B cell (primary cell): ENCODE measurements at regions of chr3 and their contacts with region 1.

Region 1: GRCh38 chr3:186783073-186783730 is at the start of gene EIF4A2:
- DNase-seq: peak; percentile 97
- ATAC-seq: peak; percentile 77
- H3K4me3 ChIP-seq: peak within 1 kb of the TSS; percentile 80 to 100 (median 90)
- H3K4me3 Mint-ChIP-seq: peak within 1 kb of the TSS; percentile 97
- H3K27ac ChIP-seq: peak within 1 kb of the TSS; percentile 97 to 98
- H3K27ac Mint-ChIP-seq: peak within 1 kb of the TSS; percentile 99
- H3K4me1 ChIP-seq: peaks cover 37 to 40% of the 10 kb centered on the region in 2 donors
- H3K4me1 Mint-ChIP-seq: peaks cover 52% of the 10 kb centered on the region
- H3K27me3 ChIP-seq: no peaks in the 10 kb centered on the region
- H3K27me3 Mint-ChIP-seq: no peaks in the 10 kb centered on the region
- CTCF ChIP-seq: no peak
- total RNA-seq, gene EIF4A2: 490 and 506 TPM in 2 replicates

Region 2: DNA sequence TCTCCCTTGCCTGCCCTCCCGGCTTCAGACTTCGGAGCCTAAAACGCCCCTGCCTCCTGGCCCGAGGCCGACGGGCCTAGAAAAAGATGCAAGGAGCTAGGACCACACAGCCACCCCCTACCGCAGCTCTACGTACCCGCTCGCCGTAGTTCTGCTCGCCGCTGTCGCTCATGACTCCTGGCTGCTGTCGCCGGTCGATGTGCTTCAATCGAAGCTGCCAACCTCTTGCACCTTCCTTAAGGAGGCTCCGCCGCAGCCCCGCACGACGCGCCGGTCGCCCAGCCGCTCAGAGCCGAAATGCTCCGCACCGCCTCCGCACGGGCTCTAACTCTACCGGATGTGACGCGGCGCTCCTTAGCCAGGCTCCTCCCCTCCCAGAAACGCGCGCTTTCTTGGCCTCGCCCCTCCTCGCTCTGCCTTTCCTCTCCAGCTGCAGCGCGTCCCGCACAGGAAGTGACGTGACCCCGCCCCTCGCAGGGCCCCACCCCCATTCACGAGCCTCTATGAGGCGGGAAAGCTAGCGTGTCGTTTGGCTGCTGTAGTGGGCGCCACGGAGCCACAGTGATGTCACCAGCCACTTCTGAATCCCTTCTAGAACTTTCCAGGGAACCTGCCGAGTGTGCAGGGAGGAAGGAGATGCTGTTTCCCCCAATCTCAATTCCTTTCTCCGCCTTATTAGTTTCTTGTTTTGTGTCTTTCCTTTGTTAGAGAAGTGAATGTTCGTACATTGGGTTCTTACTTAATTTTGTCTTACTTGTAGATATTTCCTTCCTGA is 845.3 kb before region 1 on chr3 and contains the start of gene TRA2B:
- CTCF ChIA-PET with region 1: interaction called, 8 read pairs
- POLR2A ChIA-PET with region 1: interaction called, 16 read pairs
- intact Hi-C with region 1: loop called (anchors 1 kb)
- DNase-seq: peak; percentile 99
- ATAC-seq: peak; percentile 89
- H3K4me3 ChIP-seq: peak within 1 kb of the TSS; percentile 99 to 100 (median 100)
- H3K4me3 Mint-ChIP-seq: peak within 1 kb of the TSS; percentile 99
- H3K27ac ChIP-seq: peak within 1 kb of the TSS; percentile 99 to 100
- H3K27ac Mint-ChIP-seq: peak within 1 kb of the TSS; percentile 100
- H3K4me1 ChIP-seq: peaks cover 26 to 28% of the 10 kb centered on the region in 2 donors
- H3K4me1 Mint-ChIP-seq: peaks cover 39% of the 10 kb centered on the region
- H3K27me3 ChIP-seq: no peaks in the 10 kb centered on the region
- H3K27me3 Mint-ChIP-seq: no peaks in the 10 kb centered on the region
- CTCF ChIP-seq: peak; percentile 51
- total RNA-seq, gene TRA2B: 218 and 220 TPM in 2 replicates

Region 3: DNA sequence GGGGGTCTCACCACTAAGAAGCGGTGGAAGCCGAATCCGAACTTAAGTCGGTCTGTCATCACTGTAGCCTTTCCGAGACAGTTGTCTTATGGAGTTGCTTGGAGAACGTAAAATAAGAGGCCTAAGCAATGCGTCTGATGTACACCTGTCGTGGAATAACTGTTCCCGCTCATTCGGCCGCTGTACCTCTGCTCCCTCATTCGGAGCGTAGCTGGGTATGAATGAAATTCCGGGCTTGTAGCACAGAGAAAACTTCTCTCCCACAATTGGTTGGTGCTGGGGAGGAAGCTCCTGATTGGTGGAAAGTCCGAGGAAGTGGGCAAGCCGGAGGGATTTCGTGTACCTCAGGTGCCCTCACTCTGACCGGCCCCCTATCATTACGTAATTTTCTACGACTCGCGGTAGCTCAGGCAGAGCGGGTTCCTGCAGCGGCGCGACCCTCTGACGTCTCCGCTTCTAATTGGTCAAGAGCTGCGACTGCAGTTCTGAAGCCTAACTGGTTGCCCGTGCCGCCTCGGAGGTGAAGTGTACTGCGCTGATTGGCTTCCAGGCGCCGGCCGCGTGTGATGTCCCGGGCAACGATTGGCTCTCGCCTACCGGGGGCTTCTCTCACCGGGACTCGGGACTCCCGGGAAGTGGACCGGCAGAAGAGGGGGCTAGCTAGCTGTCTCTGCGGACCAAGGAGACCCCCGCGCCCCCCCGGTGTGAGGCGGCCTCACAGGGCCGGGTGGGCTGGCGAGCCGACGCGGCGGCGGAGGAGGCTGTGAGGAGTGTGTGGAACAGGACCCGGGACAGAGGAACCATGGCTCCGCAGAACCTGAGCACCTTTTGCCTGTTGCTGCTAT is 212.9 kb before region 1 on chr3 and contains the start of gene DNAJB11:
- CTCF ChIA-PET with region 1: no interaction called
- POLR2A ChIA-PET with region 1: interaction called, 18 read pairs
- intact Hi-C with region 1: loop called (anchors 1 kb)
- DNase-seq: peak; percentile 99
- ATAC-seq: peak; percentile 85
- H3K4me3 ChIP-seq: peak within 1 kb of the TSS; percentile 86 to 98 (median 90)
- H3K4me3 Mint-ChIP-seq: peak within 1 kb of the TSS; percentile 98
- H3K27ac ChIP-seq: peak within 1 kb of the TSS; percentile 91 to 96
- H3K27ac Mint-ChIP-seq: peak within 1 kb of the TSS; percentile 98
- H3K4me1 ChIP-seq: peaks cover 28 to 40% of the 10 kb centered on the region in 2 donors
- H3K4me1 Mint-ChIP-seq: peaks cover 51% of the 10 kb centered on the region
- H3K27me3 ChIP-seq: no peaks in the 10 kb centered on the region
- H3K27me3 Mint-ChIP-seq: no peaks in the 10 kb centered on the region
- CTCF ChIP-seq: no peak
- total RNA-seq, gene DNAJB11: 27.7 and 28.5 TPM in 2 replicates

Region 4: DNA sequence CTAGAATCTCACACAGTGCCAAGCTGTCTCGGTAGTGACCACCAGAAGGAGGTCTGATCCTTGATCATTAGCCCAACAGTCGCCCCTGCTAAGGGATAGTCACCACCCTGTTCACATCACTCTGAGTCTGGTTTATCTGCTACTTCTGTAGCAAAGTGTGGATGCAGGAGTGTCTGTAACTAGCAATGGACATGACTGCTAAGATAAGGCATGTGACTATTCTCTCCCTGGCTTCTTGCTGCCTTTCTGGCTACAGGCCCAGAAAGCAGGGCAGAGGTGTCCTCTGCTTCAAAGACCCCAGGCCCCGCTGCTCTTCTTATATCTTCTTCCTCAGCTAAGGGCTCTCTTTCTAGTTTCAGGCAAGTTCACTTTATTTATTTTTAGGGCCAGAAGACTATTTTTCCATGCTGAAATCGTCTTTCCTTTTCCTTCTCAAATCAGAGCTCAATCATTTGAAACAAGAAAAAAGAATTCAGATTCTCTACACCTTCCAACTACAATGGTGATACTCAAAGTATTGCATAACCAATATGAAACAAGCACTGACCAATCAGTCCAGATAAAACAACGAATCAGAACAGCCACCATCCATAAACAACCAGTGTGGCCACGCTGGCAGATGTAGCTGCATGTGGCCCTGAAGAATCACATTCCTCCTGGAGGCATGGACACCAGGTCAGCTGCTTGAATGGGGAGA is 74.1 kb before region 1 on chr3:
- CTCF ChIA-PET with region 1: no interaction called
- POLR2A ChIA-PET with region 1: no interaction called
- intact Hi-C with region 1: no loop called
- DNase-seq: no peak
- ATAC-seq: no peak
- H3K4me3 ChIP-seq: no peak overlapping the region
- H3K4me3 Mint-ChIP-seq: no peak overlapping the region
- H3K27ac ChIP-seq: no peak overlapping the region
- H3K27ac Mint-ChIP-seq: no peak overlapping the region
- H3K4me1 ChIP-seq: no peaks in the 10 kb centered on the region
- H3K4me1 Mint-ChIP-seq: no peaks in the 10 kb centered on the region
- H3K27me3 ChIP-seq: peaks cover 0 to 9% (median 3%) of the 10 kb centered on the region in 4 experiments
- H3K27me3 Mint-ChIP-seq: peaks cover 27% of the 10 kb centered on the region
- CTCF ChIP-seq: no peak

Region 5: GRCh38 chr3:186772701-186773424 is 10.3 kb before region 1 on chr3:
- CTCF ChIA-PET with region 1: interaction called, 9 read pairs
- POLR2A ChIA-PET with region 1: interaction called, 78 read pairs
- intact Hi-C with region 1: loop called (anchors 1 kb)
- DNase-seq: peak; percentile 87
- ATAC-seq: peak; percentile 93
- H3K4me3 ChIP-seq: peak overlapping the region; percentile 50 to 98 (median 79)
- H3K4me3 Mint-ChIP-seq: peak overlapping the region; percentile 93
- H3K27ac ChIP-seq: peak overlapping the region; percentile 69 to 87
- H3K27ac Mint-ChIP-seq: peak overlapping the region; percentile 91
- H3K4me1 ChIP-seq: peaks cover 11 to 12% of the 10 kb centered on the region in 2 donors
- H3K4me1 Mint-ChIP-seq: peaks cover 17% of the 10 kb centered on the region
- H3K27me3 ChIP-seq: no peaks in the 10 kb centered on the region
- H3K27me3 Mint-ChIP-seq: no peaks in the 10 kb centered on the region
- CTCF ChIP-seq: no peak

Region 6: DNA sequence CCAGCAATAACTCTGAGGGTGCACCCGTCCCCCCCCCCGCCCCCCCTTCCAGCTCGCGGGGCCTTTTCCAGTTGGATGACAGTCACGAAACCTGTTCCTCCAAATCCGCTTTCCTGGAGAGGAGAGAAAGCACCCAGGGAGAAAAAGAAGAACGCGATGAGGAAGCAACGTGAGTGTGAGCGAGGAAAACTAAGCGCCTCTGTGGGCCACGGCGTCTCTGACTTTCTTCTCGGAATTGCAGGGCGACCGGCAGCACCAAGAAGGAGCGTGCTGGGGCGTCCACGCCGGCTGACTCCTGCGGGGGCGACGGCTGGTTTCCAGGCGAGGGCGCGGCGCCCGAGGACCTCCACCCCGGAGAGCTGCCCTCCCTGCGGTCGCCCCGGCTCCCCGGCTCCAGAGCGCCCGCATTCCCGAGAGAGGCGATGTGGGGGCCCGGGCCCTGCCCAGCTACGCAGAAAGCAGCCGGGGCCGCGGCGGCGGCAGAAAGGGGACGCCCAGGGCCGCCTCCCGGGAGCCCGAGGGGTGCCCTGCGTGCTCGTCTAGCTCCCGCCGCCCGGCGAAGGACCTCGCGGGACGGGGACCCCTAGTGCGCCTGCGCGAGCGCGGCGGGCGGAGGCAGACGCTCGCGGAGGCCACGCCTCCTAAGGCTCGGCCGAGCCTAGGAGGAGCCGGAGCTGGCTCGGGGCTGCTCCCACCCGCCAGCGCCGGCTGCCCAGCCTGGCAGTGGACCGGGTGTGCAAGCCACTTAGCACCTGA is 44.0 kb after region 1 on chr3:
- CTCF ChIA-PET with region 1: interaction called, 4 read pairs
- POLR2A ChIA-PET with region 1: interaction called, 19 read pairs
- intact Hi-C with region 1: no loop called
- DNase-seq: peak; percentile 92
- ATAC-seq: peak; percentile 95
- H3K4me3 ChIP-seq: peak overlapping the region in 4 of 5 experiments; percentile 57 to 78 (median 70)
- H3K4me3 Mint-ChIP-seq: peak overlapping the region; percentile 79
- H3K27ac ChIP-seq: peak overlapping the region in 1 of 2 donors; percentile 55
- H3K27ac Mint-ChIP-seq: peak overlapping the region; percentile 41
- H3K4me1 ChIP-seq: peaks cover 24 to 28% of the 10 kb centered on the region in 2 donors
- H3K4me1 Mint-ChIP-seq: peaks cover 21% of the 10 kb centered on the region
- H3K27me3 ChIP-seq: peaks cover 0 to 69% (median 42%) of the 10 kb centered on the region in 4 experiments
- H3K27me3 Mint-ChIP-seq: peaks cover 54% of the 10 kb centered on the region
- CTCF ChIP-seq: no peak